Sciatic nerve (tissue), 2 donors: ENCODE measurements at regions of chr12 and their contacts with region 1.

Region 1: GRCh38 chr12:54005853-54006686 is 2.7 kb upstream of the HOXC8 start:
- DNase-seq: peak; percentile 96
- ATAC-seq: peak; percentile 82

Region 2: GRCh38 chr12:54201001-54201794 is 195.1 kb after region 1 on chr12:
- intact Hi-C with region 1: loop called (anchors 5 kb)
- DNase-seq: peak; percentile 81
- ATAC-seq: peak; percentile 90